Activated CD8-positive, alpha-beta T cell treated with anti-CD3 and anti-CD28 coated beads for 36 hours (primary cell): ENCODE measurements at regions of chr14 and their contacts with region 1.

Region 1: DNA sequence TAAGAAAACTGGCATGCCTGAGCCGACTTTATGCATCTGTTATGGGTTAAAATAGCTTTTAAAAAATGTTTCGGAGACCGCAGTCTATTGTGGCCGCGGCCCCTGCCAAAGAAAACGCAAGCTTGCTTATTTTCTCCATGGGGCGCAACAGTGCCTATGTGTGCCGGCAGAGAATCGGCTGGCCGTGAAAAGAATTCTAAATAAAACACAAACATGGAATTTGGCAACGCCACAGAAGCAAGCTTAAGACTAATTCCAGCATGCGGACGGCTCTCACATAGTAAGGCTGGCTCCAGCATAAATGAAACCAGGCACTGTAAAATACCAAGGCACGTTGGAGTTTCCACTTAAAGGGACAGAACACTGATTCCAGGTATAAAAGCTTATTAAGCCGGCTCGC is 56.7 kb downstream of the BCL11B start:
- DNase-seq: no peak
- ATAC-seq: no peak
- H3K4me3 Mint-ChIP-seq: peak overlapping the region; percentile 64
- H3K27ac Mint-ChIP-seq: peak overlapping the region; percentile 98
- H3K4me1 Mint-ChIP-seq: peaks cover 93% of the 10 kb centered on the region
- H3K27me3 Mint-ChIP-seq: no peaks in the 10 kb centered on the region
- CTCF ChIP-seq: no peak

Region 2: DNA sequence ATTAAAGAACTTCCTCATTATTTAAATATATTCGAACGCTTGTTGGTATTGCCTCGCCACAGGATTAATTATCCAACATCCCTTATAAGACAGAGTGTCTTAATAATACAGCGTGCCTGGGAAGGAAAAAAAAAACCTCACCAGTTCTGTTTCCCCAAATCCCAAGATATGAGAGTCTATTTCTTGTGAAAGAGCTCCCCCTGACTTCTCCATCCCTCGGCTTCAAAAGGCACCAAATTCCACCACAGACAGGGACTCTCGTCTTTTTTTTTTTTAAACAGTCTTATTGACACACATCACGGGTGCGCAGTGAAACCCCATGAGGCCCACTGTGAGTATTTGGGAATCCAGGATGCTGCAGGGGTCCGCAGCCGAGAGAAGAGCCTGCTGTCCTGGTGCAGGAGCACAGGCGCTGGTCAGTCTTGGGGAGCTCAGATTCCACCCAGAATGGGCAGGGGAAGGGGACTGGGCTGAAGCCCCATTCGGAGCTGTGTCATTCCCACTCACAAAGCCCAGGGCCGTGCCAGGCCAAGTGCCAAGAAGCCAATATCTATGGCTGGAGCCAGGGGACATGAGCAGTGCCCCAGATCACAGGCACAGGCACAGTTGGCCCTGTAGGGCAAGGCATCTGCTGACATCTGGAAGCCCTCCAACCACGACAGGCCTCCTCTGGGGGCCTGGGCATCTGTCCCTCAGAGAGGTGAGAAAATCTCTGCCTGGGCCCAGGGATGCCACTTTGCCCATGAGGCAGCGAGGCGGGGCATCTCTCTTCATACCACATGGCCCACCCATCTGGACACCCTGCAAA is 15.2 kb before region 1 on chr14:
- CTCF ChIA-PET with region 1: interaction called, 5 read pairs
- POLR2A ChIA-PET with region 1: interaction called, 59 read pairs
- intact Hi-C with region 1: no loop called
- DNase-seq: no peak
- ATAC-seq: no peak
- H3K4me3 Mint-ChIP-seq: peak overlapping the region; percentile 29
- H3K27ac Mint-ChIP-seq: peak overlapping the region; percentile 98
- H3K4me1 Mint-ChIP-seq: peaks cover 99% of the 10 kb centered on the region
- H3K27me3 Mint-ChIP-seq: no peaks in the 10 kb centered on the region
- CTCF ChIP-seq: no peak